HEK293 (cell line): ENCODE measurements at regions of chr10 and their contacts with region 1.

Region 1: DNA sequence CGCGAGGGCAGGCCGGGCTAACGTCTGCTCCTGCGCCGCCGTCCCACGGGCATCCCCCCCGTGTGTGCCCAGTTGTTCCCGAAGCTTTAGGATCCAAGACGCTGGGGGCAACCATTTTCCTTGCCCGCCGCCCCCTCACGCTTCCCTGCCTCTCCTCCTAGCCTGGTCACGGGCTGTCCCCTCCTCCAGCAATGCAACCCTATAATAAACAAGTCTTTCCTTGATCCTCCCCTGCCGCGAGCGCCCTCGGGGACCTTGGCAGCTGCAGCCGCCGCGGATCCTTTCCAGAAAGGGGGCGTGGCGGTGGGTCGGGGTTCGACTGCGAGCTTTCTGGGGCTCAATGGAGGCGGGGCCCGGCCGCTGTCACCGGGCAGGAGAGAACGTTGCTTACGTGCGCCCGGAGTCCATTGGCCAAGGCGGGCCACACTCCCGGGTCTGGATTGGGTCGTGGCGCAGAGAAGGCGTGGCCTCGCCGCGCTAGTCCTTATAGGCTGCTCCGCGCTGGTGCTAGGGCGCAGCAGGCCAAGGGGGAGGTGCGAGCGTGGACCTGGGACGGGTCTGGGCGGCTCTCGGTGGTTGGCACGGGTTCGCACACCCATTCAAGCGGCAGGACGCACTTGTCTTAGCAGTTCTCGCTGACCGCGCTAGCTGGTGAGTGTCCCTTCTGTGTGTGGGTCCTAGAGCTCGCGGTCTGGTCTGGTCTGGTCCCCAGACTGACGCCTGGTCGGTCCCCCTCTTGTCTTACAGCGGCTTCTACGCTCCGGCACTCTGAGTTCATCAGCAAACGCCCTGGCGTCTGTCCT is at the start of gene DDIT4:
- H3K4me3 ChIP-seq: peak within 1 kb of the TSS; percentile 65
- H3K27ac ChIP-seq: peak within 1 kb of the TSS; percentile 99
- H3K4me1 ChIP-seq: peaks cover 7% of the 10 kb centered on the region
- CTCF ChIP-seq: peak; percentile 41; the same call in 1 of the 2 replicates

Region 2: GRCh38 chr10:72215652-72216549 is 57.7 kb before region 1 on chr10 and contains the starts of genes ANAPC16 and ASCC1:
- CTCF ChIA-PET with region 1: interaction called, 4 read pairs
- POLR2A ChIA-PET with region 1: interaction called, 11 read pairs
- H3K4me3 ChIP-seq: peak within 1 kb of the TSS; percentile 72
- H3K27ac ChIP-seq: peak within 1 kb of the TSS; percentile 91
- H3K4me1 ChIP-seq: peaks cover 7% of the 10 kb centered on the region
- CTCF ChIP-seq: 0 out of 2 replicates have a peak, but pooled peaks have one; percentile 14

Region 3: DNA sequence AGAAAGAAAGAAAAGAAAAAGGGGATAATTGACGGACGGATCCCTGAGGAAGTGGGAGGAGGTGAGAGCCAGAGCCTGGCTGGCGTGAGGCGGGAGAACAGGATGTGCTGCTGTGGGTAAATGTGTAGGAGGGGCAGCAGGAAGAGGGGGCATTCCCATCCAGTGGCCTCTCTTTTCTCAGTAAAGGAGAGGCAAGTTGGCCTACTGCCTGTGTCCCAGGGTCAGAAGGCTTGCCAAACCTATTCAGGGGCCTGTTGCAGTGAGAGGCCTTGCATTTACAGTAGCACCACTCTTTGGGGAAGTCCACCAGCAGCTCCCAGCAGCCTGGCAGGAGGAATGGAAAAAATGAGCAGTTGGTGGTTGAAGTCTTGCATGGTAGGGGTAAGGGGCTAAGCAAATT is 30.9 kb before region 1 on chr10:
- CTCF ChIA-PET with region 1: interaction called, 4 read pairs
- POLR2A ChIA-PET with region 1: interaction called, 36 read pairs
- H3K4me3 ChIP-seq: no peak overlapping the region
- H3K27ac ChIP-seq: no peak overlapping the region; the same call in 1 of the 2 replicates
- H3K4me1 ChIP-seq: peaks cover 16% of the 10 kb centered on the region
- CTCF ChIP-seq: no peak

Region 4: DNA sequence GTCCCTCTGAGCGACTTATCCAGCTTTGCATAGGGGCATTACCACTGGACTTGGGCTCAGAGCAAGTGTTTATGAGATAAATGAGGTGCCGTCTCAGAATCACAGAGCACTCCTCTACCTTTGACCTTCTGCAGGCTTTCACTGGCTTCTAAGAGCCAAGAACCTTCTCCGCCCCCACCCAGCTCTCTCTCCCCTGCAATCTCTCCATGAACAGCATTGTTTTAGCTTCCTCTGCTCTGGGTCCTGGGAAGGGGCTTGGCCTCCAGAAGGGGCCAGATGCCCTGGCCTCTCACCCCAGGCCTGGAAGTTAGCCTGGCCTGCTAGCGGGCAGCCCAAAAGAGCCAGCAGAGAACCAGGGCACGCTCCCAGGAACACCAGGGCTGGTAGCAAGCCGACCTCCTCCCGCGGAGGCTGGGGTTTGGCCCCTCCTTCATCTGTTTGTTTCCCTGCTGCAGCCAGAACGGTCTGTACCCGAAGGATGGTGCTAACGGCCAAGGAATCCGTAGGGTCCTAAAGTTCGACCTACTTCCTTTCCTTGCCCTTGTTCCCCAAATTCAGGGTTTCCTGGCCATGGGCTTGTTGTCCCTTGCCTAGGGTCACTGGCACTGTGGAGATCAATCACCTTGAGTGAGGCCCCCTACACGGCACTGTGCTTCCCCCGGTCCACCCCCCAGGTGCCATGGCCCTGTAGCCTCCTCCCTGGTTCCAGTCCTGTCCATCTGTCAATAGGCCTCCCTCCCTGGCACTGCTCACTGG is 18.6 kb before region 1 on chr10:
- CTCF ChIA-PET with region 1: interaction called, 27 read pairs
- POLR2A ChIA-PET with region 1: interaction called, 120 read pairs
- H3K4me3 ChIP-seq: no peak overlapping the region
- H3K27ac ChIP-seq: peak overlapping the region; percentile 61; the same call in 1 of the 2 replicates
- H3K4me1 ChIP-seq: peaks cover 17% of the 10 kb centered on the region
- CTCF ChIP-seq: peak; percentile 71; the same call in 1 of the 2 replicates

Region 5: DNA sequence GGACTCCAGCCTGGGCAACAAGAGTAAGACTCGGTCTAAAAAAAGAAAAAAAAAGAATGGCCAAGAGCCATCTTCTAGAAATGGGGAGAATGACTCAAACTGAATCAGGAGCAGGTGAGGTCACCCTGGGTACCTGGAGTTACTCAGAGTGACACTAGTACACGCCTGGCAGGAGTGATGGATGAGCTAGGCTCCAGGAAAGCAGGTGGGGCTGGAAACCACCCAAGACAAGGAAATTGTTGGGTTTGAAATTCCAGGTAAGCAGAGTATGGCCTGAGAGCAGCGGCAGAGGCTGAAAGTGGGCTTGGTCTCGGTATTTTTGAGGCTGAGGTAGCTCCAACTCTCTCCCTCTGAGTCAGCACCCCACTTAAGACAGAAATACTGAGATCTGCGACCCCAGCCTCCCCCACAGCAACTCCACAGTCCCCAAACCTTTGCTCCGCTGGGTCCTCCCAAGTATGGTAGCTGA is 18.6 kb after region 1 on chr10:
- CTCF ChIA-PET with region 1: interaction called, 6 read pairs
- POLR2A ChIA-PET with region 1: interaction called, 31 read pairs
- H3K4me3 ChIP-seq: no peak overlapping the region
- H3K27ac ChIP-seq: no peak overlapping the region
- H3K4me1 ChIP-seq: no peaks in the 10 kb centered on the region
- CTCF ChIP-seq: no peak

Region 6: DNA sequence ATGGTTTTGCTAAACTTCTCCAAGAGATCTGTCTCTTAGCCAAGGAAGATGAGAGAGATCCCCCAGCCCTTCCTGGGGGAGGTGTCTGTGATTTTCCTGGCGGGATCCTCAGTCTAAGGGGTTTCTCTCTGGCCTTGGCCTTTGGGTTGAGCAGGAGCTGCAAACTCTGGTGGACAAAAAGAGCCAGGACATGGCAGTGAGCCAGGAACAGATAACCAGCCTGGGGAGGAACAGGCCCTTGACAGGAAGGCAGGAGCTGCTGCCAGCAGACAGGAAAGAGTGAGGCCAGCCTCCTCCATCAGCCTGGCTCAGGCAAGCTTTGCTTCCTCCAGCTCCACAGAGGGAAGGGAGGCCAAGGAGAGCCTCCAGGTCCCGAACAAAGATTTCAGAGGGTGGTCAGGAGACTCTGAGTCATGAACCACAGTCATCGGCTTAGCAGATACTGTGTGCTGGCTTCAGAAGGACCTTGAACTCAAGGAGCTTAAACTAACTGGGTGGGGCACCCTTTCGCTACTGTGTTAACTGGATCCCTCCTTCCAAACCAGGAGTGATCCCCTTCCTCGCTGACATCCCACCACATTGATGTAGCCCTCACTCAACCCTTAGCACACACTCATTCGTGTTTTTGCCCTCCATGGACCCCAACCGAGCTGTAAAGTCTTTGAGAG is 34.8 kb after region 1 on chr10:
- CTCF ChIA-PET with region 1: interaction called, 5 read pairs
- POLR2A ChIA-PET with region 1: interaction called, 13 read pairs
- H3K4me3 ChIP-seq: no peak overlapping the region
- H3K27ac ChIP-seq: no peak overlapping the region; the same call in 1 of the 2 replicates
- H3K4me1 ChIP-seq: no peaks in the 10 kb centered on the region
- CTCF ChIP-seq: no peak

Region 7: GRCh38 chr10:72331601-72332422 is 58.2 kb after region 1 on chr10:
- CTCF ChIA-PET with region 1: interaction called, 52 read pairs
- POLR2A ChIA-PET with region 1: interaction called, 107 read pairs
- H3K4me3 ChIP-seq: no peak overlapping the region
- H3K27ac ChIP-seq: peak overlapping the region; percentile 91
- H3K4me1 ChIP-seq: peaks cover 28% of the 10 kb centered on the region
- CTCF ChIP-seq: peak; percentile 88